ENCODE measurements at regions of chr4 and their contacts with region 1.

Region 1: DNA sequence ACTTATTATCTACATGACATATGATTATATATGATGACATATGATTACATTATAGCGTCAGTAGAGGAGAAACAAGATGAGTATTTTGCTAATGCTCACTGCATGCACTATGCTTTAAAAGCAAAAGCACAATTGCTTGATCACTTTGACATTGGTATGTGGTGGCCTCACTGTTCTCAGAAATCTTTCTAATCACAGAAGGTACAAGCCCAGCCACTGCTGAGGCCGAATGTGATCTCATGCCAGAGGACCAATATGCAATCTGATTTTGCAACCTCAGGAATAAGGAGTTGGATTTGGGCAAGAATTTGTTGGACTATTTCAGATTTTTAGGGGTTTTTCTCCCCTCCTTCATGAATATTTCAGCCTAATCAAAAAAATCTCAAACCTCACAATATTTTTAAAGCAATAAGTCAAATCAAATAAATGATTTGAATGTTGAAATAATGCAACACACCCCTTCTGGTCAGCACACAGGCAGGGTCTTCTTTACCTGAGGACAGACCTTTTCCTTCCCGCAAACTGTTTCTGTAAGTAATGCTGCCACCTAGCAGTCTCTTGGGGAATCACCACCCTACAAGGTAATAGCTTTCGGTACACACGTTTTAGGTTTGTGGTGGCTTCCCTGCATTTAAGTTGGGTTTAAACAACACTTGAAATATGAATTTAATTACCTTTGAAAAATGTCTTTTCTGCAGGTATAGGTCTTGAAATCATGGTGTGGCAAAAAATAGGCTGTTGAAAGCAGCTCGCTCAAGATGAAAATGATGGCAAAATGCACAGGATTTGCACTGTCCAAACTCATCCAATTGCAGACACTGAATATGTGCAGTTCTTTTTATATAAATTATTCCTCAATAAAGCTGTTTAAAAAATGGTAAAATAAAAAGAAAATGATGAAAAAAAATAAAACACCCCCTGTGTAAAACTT is 4.8 kb upstream of the CXCL13 start:
- DNase-seq: no peak
- ATAC-seq: peak in 1 of 2 donors; percentile 47

Region 2: DNA sequence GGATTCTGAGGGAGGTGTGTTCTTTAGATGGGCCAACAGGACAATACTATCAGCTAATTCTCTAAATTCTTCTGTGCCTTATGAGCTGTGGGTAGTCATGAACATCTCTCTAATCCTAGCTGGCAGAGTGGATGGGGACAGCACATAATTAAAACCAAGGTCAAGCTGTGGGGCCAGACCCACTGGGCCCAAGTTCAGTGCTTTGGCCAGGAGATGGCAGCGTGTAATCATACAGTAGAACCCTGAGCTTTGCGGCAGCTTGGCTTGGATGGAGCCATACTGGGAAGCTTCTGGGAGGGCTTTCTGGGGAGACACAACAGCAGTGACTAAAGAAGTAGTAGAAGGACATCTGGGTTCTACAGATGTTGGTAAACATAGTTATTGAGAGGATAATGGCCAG is 135.5 kb before region 1 on chr4:
- intact Hi-C with region 1: loop called in 1 of 2 experiments (anchors 10 kb)
- DNase-seq: no peak
- ATAC-seq: peak in 1 of 2 donors; percentile 56

Region 3: DNA sequence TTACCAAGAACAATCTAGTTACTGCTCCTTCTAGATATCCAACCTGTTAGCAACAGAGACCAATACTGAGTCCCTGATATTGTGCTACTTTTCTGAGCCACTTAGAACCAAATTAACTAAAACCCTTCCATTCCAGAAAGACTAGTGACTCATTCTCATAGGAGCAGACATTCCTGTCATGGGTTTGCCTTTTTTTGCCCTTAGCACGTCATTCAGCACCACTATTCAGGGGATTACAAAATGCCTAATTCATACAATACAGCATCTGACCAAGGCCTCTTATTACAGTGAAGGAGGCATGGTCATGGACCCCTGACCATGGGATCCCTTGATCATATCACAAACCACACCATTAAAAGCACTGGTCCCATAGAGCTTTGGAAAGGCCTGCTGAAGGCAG is 118.9 kb before region 1 on chr4:
- intact Hi-C with region 1: no loop called
- DNase-seq: no peak
- ATAC-seq: no peak

Region 4: DNA sequence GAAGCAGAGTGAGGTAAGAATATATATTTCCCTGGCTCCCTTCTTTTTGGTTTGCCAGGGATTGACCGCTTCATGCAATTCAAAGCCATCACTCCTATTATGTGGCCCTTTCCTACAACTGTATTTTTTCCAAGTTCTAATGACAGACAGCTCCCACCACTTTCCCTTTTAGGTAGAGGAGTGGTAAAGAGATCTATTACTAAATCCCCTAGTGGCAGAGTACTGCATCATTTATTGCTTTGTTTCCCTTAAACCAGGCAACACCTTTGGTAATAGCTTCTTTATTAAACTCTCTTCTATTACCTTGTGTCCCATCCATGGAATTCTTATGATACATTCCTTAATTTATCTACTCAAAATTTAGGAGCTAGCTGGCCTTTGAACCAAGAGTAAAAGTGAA is 127.6 kb after region 1 on chr4:
- intact Hi-C with region 1: no loop called
- DNase-seq: no peak
- ATAC-seq: no peak